Activated CD4-positive, alpha-beta T cell treated with anti-CD3 and anti-CD28 coated beads for 36 hours (primary cell): ENCODE measurements at regions of chr1 and their contacts with region 1.

Region 1: GRCh38 chr1:100895540-100896483 is at the start of gene SLC30A7:
- DNase-seq: peak; percentile 98
- ATAC-seq: peak; percentile 81
- H3K4me3 Mint-ChIP-seq: peak within 1 kb of the TSS; percentile 100
- H3K27ac Mint-ChIP-seq: peak within 1 kb of the TSS; percentile 100
- H3K4me1 Mint-ChIP-seq: peaks cover 44% of the 10 kb centered on the region
- H3K27me3 Mint-ChIP-seq: no peaks in the 10 kb centered on the region
- total RNA-seq, gene SLC30A7: 33.2 to 34.6 TPM

Region 2: GRCh38 chr1:100132566-100133477 is 763.0 kb before region 1 on chr1 and contains the starts of genes SASS6 and TRMT13:
- CTCF ChIA-PET with region 1: no interaction called
- POLR2A ChIA-PET with region 1: interaction called, 4 read pairs
- intact Hi-C with region 1: loop called in 1 of 2 experiments (anchors 1 kb)
- DNase-seq: peak; percentile 97
- ATAC-seq: peak; percentile 94
- H3K4me3 Mint-ChIP-seq: peak within 1 kb of the TSS; percentile 98
- H3K27ac Mint-ChIP-seq: peak within 1 kb of the TSS; percentile 98
- H3K4me1 Mint-ChIP-seq: peaks cover 32% of the 10 kb centered on the region
- H3K27me3 Mint-ChIP-seq: no peaks in the 10 kb centered on the region
- total RNA-seq, gene SASS6: 14.2 to 17.4 TPM
- total RNA-seq, gene TRMT13: 19.0 to 20.2 TPM

Region 3: DNA sequence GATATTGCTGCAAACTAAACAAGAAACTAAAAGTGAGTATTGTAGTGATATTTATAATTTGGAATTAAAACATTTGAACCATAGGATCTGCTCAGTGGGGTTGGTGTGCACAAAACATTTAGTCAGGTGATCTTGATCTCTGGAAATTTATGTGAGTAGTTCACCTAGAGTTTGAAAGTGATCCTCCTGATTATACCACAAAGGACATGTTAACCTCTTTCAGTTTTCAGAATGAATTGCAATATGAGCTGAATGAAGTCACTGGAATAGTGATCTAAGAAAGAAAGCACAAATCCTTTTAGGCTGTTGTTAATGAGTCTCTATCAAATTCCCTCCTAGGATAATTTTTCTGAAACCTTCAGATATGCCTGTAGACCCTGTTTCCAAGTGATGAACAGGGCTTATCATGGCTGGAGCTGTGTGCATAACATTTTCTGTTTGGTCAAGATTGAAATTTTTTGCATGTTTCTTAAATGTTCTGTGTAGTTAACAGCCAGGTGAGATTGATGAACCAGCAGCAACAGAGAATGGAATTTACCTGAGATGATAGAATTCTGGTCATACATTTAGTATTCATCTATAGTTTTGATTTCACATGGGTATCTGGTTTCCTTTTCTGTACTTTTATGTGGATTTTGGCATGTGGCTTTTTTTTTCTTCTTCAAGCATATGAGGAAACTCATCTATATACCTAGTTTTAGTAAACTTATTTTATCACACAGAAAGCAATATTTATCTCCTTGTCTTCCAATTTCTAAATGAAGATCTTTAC is 518.0 kb before region 1 on chr1:
- CTCF ChIA-PET with region 1: no interaction called
- POLR2A ChIA-PET with region 1: no interaction called
- intact Hi-C with region 1: loop called in 1 of 2 experiments (anchors 5 kb)
- DNase-seq: no peak
- ATAC-seq: peak; percentile 89
- H3K4me3 Mint-ChIP-seq: no peak overlapping the region
- H3K27ac Mint-ChIP-seq: peak overlapping the region; percentile 84
- H3K4me1 Mint-ChIP-seq: peaks cover 62% of the 10 kb centered on the region
- H3K27me3 Mint-ChIP-seq: peaks cover 3% of the 10 kb centered on the region

Region 4: GRCh38 chr1:101025657-101026504 is 130.1 kb after region 1 on chr1 and contains the start of gene DPH5:
- CTCF ChIA-PET with region 1: no interaction called
- POLR2A ChIA-PET with region 1: no interaction called
- intact Hi-C with region 1: loop called in 1 of 2 experiments (anchors 1 kb)
- DNase-seq: peak; percentile 95
- ATAC-seq: peak; percentile 96
- H3K4me3 Mint-ChIP-seq: peak within 1 kb of the TSS; percentile 93
- H3K27ac Mint-ChIP-seq: peak within 1 kb of the TSS; percentile 98
- H3K4me1 Mint-ChIP-seq: peaks cover 55% of the 10 kb centered on the region
- H3K27me3 Mint-ChIP-seq: no peaks in the 10 kb centered on the region
- total RNA-seq, gene DPH5: 48.4 to 59.6 TPM